Tibial artery (tissue), 4 donors: ENCODE measurements at regions of chr6 and their contacts with region 1.

Region 1: DNA sequence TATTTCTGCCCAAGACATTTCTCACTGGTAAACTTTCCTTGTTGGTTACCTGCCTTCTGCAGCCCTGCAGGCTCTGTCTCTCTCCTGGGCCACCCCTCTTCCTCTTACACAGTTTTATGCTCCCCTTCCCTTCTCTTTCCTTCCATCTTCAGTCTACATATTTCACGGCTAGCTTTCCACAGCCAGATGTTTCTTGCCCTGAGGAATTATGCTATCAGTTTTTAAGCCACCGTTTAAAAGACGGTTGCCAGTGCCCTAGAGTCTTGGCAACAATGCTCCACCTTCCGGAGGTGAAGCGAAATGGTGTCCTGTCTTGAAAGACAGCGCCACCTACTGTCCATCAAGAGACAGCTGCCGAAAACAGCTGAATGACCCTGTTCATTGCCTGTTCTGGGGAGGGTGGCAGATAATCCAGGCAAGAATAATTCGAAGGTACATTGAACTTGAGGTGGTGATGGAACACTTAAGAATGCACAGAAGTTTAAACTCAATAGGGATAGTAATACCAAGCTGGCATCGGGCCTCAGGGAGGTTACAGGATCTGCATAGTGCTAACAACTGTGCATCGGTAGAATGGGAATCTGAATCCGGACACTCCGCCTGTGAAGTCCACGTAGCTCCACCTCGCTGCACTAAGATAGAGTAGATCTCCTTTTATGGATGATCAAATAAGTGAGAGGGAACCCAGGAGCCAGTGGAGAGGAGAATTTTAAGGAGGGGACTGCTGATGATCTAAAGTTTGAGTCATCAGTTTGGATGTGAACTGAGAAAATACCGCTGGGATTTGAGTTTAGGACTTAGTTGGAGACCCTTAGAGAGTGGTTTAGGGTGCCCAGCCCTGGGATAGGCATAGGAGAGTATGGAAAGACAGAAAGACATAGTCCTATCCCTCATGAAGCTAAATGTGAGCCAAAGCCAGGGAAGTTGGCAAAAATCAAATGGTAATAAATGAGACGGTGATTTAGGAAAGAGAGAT is 4.8 kb upstream of the TRIM40 start:
- DNase-seq: peak in 1 of 2 donors; percentile 61
- H3K4me3 ChIP-seq: no peak overlapping the region
- H3K27ac ChIP-seq: no peak overlapping the region
- H3K4me1 ChIP-seq: peaks cover 0 to 15% (median 5%) of the 10 kb centered on the region in 4 donors
- H3K27me3 ChIP-seq: peaks cover 0 to 75% of the 10 kb centered on the region in 2 donors
- CTCF ChIP-seq: peak; percentile 90 to 92

Region 2: DNA sequence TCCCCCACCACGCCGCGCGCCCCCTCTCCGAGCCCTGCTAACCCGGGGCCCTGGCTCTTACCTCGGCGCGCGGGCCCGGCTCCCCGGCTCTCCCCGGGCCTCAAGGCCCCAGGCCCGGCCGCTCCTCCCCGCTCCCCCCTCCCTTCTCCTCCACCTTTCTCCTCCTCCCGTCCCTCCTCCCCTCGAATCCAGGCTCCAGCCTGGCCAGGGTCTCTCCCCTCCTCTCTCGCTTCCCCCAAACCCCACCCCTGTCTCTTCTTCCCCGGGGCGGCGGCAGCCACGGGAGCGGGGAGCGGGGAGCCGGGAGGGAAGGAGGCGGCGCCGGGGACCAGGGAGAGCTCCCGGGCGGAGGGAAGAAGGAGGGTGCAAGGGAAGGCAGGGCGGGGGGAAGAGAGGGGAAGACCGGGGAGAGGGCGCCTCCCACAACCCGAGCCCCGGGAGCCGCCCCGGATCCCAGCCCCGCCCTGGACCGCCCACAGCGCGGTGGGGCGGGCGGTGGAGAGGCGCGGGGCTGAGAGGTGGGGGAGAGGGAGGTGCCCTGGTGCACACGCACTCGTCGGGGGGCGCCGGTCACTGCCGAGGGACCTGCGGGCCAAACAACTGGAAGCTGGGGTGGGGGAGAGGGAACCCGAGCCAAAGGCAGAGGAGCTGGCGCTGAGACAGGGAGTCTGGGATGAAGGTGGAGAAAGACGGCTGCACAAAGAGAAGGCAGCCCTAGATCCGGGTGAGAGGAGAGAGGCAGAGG is 498.2 kb before region 1 on chr6 and contains the start of gene GABBR1:
- intact Hi-C with region 1: loop called (anchors 2 kb)
- DNase-seq: peak; percentile 87 to 96
- H3K4me3 ChIP-seq: peak within 1 kb of the TSS; percentile 83 to 85
- H3K27ac ChIP-seq: peak within 1 kb of the TSS; percentile 71 to 82
- H3K4me1 ChIP-seq: peaks cover 0 to 28% (median 18%) of the 10 kb centered on the region in 4 donors
- H3K27me3 ChIP-seq: no peaks in the 10 kb centered on the region
- CTCF ChIP-seq: no peak

Region 3: DNA sequence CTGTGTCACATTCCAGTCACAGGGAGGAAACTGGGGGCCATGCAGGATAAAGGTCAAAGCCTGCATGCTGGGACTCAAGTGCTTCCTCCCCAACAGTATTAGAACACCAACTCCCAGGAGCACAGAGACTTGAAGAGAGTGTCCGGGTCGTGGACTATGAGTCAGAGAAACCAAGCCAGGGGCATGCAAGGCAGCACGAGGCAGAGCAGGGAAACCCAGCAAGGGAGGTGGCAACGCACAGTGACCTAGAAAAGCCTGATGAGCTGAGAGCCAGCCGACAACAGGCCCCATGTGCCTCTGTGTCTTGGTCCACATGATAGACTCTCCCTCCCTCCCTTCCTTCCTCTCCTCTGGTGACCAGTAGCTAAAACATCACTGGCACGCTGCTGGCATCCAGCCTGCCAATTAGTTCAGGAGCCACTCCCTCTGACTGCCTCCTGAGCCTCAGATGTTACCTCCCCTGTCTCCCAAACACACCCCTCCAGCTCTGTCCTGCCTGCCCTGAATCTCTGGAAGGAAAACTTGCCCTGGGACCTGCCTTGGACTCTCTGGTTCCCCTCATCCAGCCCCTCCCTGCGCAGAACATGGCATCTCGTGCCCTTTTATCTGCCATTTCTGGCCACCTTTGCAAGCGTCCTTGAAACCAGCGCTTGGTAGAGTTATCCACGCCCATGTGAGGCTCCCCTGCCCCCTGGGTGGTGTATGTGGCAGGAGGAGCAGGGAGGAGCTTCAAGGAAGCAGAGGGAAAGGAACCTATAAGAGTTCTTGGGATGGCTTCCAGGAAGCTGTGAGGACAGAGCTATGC is 39.4 kb before region 1 on chr6:
- intact Hi-C with region 1: no loop called
- DNase-seq: no peak
- H3K4me3 ChIP-seq: no peak overlapping the region
- H3K27ac ChIP-seq: no peak overlapping the region
- H3K4me1 ChIP-seq: no peaks in the 10 kb centered on the region
- H3K27me3 ChIP-seq: peaks cover 0 to 78% of the 10 kb centered on the region in 2 donors
- CTCF ChIP-seq: no peak

Region 4: GRCh38 chr6:30272017-30272416 is 140.8 kb after region 1 on chr6:
- intact Hi-C with region 1: no loop called
- DNase-seq: no peak
- H3K4me3 ChIP-seq: no peak overlapping the region
- H3K27ac ChIP-seq: no peak overlapping the region
- H3K4me1 ChIP-seq: peaks cover 0 to 4% (median 0%) of the 10 kb centered on the region in 4 donors
- H3K27me3 ChIP-seq: no peaks in the 10 kb centered on the region
- CTCF ChIP-seq: no peak